Astrocyte of the cerebellum (primary cell): ENCODE measurements at regions of chr10 and their contacts with region 1.

Region 1: DNA sequence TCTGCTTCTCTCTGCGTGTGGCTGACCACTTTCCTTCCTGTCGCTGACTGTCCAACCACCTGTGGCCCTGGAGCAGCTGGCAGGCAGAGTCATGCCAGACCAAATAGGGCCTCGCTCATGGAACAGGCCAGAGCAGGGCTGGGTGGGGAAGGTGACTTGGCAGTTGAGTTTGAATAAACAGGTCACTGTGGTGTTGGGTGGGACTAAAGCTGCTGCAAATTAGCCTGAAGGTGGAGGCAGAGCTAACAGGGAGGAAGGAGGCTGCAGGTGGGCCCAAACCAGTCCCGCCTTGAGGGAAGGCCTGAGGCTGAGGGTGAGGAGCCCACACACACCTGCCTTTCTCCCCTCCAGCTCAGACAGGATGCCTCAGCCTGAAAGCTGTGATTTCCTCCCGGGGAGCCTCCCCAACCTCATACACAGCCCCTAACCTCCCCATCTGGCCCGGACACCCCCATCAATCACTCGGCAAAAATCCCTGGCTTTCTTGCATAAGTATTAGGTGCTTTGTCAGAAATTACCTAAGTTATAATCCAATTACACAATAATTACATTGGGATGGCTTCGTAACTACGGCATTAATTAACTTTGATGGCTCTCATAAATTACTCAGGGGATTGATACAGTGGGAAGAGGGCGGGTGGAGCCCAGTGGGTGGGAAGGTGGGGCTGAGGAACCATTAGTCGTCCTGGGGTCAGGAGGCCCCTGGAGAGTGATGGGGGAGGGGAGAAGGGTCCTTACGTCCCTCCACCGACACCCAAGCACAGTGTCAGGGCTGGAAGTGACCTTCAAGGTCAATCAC is 97.7 kb upstream of the PCBD1 start:
- DNase-seq: no peak
- H3K4me3 ChIP-seq: no peak overlapping the region
- CTCF ChIP-seq: no peak

Region 2: DNA sequence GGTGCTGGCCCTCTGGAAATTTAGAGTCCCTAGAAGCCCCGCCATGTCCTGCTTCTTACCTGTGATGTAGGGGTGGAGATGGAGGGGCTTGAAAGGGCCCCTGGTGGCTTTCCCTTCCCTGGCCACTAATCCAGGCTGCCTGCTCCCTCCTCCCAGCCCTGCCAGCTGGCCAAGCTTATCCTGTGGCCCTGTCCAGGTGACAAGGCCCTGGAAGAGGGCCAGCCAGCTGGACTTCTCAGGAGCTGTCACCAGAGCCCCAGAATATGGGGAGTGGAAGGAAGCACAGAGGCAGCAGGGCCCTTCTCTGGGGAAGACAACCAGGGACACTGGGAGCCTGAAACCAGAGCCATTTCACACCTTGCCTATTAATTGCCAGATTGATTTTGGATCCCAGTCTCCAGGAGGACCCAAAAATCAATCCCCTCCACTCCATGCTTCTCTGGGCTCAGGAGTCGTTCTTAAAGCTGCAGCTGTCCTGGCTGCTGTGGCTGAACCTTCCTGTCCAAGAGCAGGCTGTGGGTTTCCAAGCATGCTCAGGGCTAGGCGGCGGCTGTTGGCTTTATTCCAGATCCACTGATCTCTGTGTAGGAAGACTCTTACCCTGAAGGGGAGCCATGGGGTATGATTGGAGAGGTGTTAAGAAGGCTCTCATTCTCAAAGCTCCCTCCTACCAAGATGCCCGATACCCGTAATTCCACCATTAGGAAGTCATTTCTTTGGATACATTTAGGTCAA is 45.0 kb before region 1 on chr10:
- in situ Hi-C with region 1: loop called (anchors 5 kb)
- DNase-seq: no peak
- H3K4me3 ChIP-seq: no peak overlapping the region
- CTCF ChIP-seq: no peak